ENCODE measurements at regions of chr6 and their contacts with region 1.

Region 1: DNA sequence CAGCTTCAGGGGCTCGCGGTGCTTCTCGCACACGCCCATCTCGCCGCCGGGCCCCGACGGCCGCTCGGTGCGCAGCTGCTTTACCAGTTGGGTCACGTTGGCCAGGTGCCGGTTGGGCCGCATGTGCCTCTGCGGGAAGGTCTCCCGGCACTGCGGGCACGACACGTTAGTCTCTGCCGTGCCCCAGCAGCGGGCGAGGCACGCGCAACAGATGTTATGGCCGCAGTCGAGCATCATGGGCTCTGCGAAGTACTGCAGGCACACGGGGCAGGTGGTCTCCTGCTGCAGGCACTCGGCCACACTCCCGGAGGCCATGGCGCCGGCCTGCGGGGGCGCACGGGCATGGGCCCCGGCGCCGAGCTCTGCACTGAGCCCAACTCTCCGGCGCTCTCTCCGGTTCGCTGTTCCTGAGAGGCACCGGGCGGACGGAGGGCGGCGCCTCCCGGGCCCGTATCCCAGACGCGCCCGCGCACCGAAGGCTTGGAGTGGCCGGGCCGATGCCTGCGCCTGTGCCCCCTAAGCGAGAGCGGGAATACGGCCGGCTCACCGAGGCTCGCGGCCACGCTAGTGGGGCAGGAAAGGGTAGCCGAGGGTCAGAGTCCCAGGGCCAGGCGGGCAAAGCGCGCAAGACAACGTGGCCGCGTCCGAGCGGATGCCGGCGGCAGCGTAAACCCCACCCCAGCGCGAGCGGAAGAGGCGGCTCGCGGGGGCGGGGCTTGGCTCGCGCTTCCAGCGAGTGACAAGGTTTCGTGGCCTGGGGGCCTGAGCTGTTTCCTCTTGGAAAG is at the start of gene TRIM27:
- H3K4me3 ChIP-seq: peak within 1 kb of the TSS; percentile 49
- H3K27ac ChIP-seq: peak within 1 kb of the TSS; percentile 77
- H3K4me1 ChIP-seq: peaks cover 4% of the 10 kb centered on the region; the same call in 1 of the 2 replicates
- CTCF ChIP-seq: peak; percentile 62

Region 2: DNA sequence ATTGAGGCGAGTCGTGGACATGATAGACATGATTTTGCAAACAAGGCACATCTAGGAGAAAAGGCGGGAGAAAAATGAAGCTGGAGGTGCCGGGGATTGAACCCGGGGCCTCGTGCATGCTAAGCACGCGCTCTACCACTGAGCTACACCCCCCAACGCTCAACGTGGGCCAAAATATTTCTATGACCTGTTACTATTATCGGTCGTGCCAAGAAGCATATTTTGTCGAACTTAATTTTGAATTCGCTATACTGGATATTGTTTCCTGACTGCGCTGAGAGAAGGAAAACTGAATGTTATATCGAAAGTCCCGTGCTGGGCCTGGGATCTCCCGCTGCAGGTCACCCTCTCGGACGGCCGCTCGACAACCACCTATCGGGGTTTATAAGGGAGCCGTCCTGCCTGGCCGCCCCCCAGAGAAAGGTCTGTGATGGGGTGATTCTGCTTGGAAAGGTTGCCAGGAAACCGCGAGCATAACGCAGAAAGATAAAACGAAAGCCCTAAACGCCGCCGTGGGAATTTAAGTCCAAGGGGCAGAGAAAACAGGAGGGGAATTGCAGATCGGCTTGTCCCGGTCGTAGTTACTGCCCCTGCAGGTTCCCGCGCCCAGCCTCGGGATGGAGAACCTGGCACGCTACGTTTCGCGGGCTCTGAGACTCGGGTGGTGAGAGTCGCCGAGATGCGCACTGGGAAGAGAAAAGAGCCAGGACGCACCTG is 59.7 kb before region 1 on chr6:
- CTCF ChIA-PET with region 1: no interaction called
- POLR2A ChIA-PET with region 1: interaction called, 10 read pairs
- H3K4me3 ChIP-seq: peak overlapping the region; percentile 77
- H3K27ac ChIP-seq: peak overlapping the region; percentile 60; the same call in 1 of the 2 replicates
- H3K4me1 ChIP-seq: no peaks in the 10 kb centered on the region
- CTCF ChIP-seq: peak; percentile 70

Region 3: GRCh38 chr6:28895134-28895812 is 28.2 kb before region 1 on chr6:
- CTCF ChIA-PET with region 1: interaction called, 6 read pairs
- POLR2A ChIA-PET with region 1: interaction called, 19 read pairs
- H3K4me3 ChIP-seq: peak overlapping the region; percentile 66
- H3K27ac ChIP-seq: peak overlapping the region; percentile 79
- H3K4me1 ChIP-seq: peaks cover 3% of the 10 kb centered on the region; the same call in 1 of the 2 replicates
- CTCF ChIP-seq: no peak

Region 4: DNA sequence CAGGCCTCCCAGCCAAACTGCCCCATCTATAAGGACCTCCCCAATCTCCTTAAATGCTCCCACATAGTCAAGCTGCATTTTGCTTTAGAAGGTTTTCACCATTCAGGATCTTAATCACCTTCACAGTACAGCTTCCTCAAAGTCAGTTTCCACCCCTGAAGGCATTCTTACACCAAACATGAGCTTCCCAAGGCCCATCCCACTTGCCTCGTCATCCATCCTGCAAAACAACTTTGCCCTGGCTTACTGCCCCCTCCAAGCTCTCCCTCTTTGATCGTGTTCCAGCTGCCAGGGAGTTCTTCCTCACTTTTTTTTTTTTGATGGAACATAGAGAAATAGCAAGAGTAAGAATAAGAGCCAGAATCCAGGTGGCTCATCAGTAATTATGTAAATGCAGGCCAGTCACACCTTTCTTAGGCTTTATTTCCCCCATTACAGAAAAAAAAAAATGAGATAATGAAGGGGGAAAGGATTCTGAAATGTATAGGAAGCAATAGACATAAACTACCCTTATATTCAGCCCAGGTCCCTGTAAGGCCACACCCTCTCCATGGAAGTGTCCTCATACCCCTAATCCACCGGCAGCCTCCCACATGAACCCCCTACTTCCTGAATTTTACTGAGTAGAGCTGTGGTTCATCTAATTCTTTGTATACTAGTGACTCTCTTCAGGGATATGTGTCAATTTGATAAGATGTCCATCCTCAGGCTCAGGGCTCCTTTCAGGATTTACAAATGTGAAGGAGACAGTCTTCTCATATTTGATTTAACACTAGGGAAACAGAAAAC is 12.4 kb before region 1 on chr6:
- CTCF ChIA-PET with region 1: interaction called, 4 read pairs
- POLR2A ChIA-PET with region 1: interaction called, 14 read pairs
- H3K4me3 ChIP-seq: no peak overlapping the region
- H3K27ac ChIP-seq: no peak overlapping the region
- H3K4me1 ChIP-seq: no peaks in the 10 kb centered on the region
- CTCF ChIP-seq: no peak

Region 5: DNA sequence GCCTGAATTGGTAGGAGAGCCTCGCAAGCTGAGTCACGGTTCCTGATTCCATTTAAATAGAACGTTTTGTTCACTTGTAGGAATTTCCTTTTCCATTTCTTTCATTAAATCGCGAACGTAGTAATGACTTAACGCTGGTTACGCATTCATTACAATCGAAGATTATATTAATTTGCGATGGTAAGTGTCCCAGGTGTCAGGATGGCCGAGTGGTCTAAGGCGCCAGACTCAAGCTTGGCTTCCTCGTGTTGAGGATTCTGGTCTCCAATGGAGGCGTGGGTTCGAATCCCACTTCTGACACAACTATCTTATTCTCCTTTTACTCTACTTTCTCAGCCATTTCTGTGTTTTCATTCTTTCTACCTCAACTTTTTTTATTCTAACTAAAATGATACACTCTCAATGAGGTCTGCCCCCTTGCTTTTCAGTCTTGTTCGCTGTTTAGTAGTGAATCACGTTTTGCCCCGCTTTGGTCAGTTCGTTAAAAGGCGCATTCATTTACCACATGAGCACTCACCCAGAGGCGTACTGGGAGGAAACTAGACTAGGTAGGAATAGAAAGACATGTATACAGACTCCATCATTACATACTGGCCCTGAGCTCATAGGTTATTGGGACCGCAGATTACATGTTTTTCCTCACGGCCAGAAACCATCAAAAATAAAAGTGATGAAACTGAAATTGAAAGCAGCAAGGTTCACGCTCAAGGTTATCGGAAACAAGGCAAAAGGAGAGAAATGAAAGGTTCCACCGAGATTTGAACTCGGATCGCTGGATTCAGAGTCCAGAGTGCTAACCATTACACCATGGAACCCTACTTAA is 17.6 kb after region 1 on chr6:
- CTCF ChIA-PET with region 1: interaction called, 11 read pairs
- POLR2A ChIA-PET with region 1: interaction called, 29 read pairs
- H3K4me3 ChIP-seq: peak overlapping the region; percentile 77
- H3K27ac ChIP-seq: peak overlapping the region; percentile 0; the same call in 1 of the 2 replicates
- H3K4me1 ChIP-seq: no peaks in the 10 kb centered on the region
- CTCF ChIP-seq: no peak

Region 6: DNA sequence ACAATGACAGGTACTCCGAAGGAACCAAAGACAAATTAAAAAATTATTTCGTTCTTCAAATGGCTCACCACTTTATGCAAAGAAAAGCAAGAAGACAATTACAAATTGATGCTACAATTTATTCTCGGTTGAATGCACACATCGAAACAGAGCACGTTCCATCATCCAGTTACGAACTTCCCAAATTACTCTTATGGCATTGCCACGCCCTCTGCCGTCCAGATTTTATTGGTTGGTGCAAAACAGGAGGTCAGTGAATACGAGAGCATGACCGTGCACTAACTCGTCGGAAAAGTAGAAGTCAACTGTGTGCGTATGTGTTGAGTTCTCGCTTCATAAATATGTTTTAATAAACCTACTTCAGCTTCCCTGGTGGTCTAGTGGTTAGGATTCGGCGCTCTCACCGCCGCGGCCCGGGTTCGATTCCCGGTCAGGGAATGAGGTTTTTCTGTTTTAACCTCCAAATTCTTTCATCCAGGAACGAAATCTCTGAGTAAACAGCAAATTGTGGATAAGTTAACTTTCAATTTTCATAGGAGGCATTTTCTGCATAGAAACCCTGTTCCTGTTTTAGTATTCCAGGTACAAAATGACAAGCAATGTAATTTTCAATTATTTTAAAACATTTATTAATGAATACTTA is 58.4 kb after region 1 on chr6:
- CTCF ChIA-PET with region 1: no interaction called
- POLR2A ChIA-PET with region 1: interaction called, 12 read pairs
- H3K4me3 ChIP-seq: peak overlapping the region; percentile 73
- H3K27ac ChIP-seq: no peak overlapping the region
- H3K4me1 ChIP-seq: peaks cover 5% of the 10 kb centered on the region; the same call in 1 of the 2 replicates
- CTCF ChIP-seq: peak; percentile 50; the same call in 1 of the 2 replicates

Measured in HEK293 (cell line).